Activated naive CD8-positive, alpha-beta T cell treated with anti-CD3 and anti-CD28 coated beads, Interleukin-2, amount 10 ng/mL, durations not matched to agents 7 days and 5 days (primary cell): ENCODE measurements at regions of chr3 and their contacts with region 1.

Region 1: DNA sequence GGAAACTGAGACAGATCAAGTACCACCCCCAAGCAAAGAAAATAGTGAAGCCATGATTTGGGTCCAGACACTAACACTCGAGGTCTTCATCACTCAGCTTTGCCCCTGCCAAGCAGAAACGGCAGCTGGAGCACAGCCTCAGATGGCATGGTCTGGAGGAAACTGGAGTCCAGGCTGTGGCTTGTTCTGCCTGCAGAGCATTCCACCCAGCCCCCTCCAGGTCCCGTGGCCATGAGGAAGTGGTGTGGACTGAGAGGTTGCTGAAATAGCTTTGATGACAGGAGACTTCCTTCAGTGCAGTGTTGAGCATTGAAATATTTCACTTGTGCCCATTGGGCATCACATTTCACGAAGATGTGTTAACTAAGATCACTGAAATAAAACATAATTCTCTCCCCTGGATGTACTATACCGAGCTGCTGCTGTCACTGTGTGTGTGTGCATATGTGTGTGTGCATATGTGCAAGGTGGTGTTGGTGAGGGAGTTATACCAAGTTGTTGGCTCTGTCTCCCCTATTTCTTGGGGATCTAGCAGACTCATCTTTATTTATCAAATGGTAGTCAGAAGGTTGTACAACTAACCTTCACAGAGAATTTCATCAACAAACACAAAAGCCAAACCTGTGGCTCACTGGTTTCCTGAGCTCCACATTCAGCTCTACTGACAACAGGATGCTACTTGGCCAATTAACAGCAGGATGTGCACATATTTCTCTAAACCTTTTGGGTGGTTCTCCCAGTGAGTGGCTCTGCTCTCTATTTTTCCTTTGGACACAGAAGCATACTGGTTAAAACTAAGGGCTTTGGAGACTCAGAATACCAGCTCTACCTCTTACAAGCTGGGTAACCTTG is 660.1 kb upstream of the CFAP20DC start:
- DNase-seq: peak; percentile 65
- ATAC-seq: peak; percentile 93
- H3K4me3 Mint-ChIP-seq: no peak overlapping the region
- H3K27ac Mint-ChIP-seq: no peak overlapping the region
- H3K4me1 Mint-ChIP-seq: peaks cover 3% of the 10 kb centered on the region
- H3K27me3 Mint-ChIP-seq: peaks cover 7% of the 10 kb centered on the region

Region 2: GRCh38 chr3:59772416-59773408 is 62.8 kb after region 1 on chr3:
- POLR2A ChIA-PET with region 1: interaction called, 14 read pairs
- DNase-seq: peak; percentile 74
- ATAC-seq: peak; percentile 77
- H3K4me3 Mint-ChIP-seq: peak overlapping the region; percentile 59
- H3K27ac Mint-ChIP-seq: peak overlapping the region; percentile 82
- H3K4me1 Mint-ChIP-seq: peaks cover 43% of the 10 kb centered on the region
- H3K27me3 Mint-ChIP-seq: peaks cover 16% of the 10 kb centered on the region